Body of pancreas (tissue), 4 donors: ENCODE measurements at regions of chr19 and their contacts with region 1.

Region 1: DNA sequence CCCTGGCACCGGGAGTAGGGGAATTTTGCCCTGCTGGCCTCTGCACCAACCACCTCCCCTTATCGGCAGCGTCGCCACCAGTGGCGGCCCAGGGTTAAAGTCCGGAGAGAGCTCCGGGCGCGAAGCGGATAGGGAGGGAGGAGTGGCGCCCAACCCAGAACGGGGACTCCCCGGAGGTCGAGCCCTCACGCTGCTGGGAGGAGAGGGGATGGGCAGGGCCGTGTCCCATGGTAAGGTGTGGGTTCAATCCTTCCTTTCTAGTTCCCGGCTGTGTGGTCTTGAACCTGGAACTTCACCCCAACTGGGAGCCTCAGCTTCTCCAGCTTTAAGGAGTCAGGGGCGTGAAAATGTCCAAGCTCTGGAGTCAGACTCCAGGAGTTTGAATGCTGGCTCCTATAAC is 23.3 kb upstream of the BCL3 start:
- DNase-seq: peak; percentile 82 to 90 (median 86)
- ATAC-seq: peak; percentile 88
- H3K4me3 ChIP-seq: no peak overlapping the region
- H3K27ac ChIP-seq: peak overlapping the region; percentile 70 to 86 (median 83)
- H3K4me1 ChIP-seq: peaks cover 35% of the 10 kb centered on the region
- H3K27me3 ChIP-seq: no peaks in the 10 kb centered on the region
- CTCF ChIP-seq: peak in 2 of 7 experiments; percentile 15 to 20
- POLR2A ChIP-seq: peak in 1 of 3 donors; percentile 33

Region 2: GRCh38 chr19:44764975-44765948 is 40.0 kb after region 1 on chr19:
- intact Hi-C with region 1: loop called (anchors 5 kb)
- DNase-seq: peak in 1 of 4 donors; percentile 60
- ATAC-seq: no peak
- H3K4me3 ChIP-seq: no peak overlapping the region
- H3K27ac ChIP-seq: no peak overlapping the region
- H3K4me1 ChIP-seq: peaks cover 5% of the 10 kb centered on the region
- H3K27me3 ChIP-seq: no peaks in the 10 kb centered on the region
- CTCF ChIP-seq: no peak
- POLR2A ChIP-seq: no peak